RWPE1 (cell line): ENCODE measurements at regions of chr10 and their contacts with region 1.

Region 1: GRCh38 chr10:132223156-132223590 is 36.4 kb downstream of the DPYSL4 start:
- DNase-seq: peak; percentile 82
- H3K27ac ChIP-seq: no peak overlapping the region
- CTCF ChIP-seq: peak; percentile 80

Region 2: GRCh38 chr10:132193907-132194552 is 29.1 kb before region 1 on chr10:
- CTCF ChIA-PET with region 1: no interaction called
- POLR2A ChIA-PET with region 1: no interaction called
- DNase-seq: peak; percentile 67
- H3K27ac ChIP-seq: no peak overlapping the region
- CTCF ChIP-seq: no peak

Region 3: DNA sequence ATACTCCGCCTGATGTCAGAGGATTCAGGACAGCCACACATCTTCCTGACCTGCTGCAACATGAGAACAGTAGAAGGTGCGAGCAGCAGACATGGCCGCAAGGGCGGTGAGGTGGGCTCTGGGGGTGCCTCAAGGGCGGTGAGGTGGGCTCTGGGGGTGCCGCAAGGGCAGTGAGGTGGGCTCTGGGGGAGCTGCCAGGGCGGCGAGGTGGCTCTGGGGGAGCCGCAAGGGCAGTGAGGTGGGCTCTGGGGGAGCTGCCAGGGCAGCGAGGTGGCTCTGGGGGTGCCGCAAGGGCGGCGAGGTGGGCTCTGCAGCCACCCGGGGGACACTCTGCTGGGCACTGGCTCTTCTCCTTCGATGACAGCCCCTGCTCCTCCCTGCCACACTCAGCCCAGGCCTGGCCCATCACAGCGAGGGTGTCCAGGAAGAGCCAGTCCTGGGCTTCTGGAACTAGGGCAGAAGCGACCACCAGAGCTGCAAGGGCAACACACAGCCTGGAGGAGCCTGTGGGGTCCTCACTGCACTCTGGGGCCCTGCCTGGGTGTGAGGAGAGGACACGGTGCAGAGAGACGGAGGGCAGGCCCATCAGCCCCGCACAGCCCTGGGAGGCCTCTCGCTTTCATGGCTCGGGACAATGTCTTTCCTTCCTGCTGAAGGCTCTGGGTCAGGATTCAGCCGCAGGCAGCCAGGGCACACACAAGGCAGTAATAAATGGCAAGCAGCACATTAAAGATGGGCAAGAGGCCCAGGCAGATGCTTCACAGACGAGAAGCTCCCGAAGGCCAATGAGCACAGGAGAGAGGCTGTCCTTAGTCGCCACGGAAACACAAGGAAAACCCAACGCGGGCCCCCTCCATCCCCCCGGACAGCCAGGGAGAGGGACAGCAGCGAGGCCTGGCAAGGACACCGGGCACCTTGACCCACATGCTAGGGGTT is 42.1 kb after region 1 on chr10:
- CTCF ChIA-PET with region 1: no interaction called
- POLR2A ChIA-PET with region 1: no interaction called
- DNase-seq: no peak
- H3K27ac ChIP-seq: no peak overlapping the region
- CTCF ChIP-seq: no peak

Region 4: GRCh38 chr10:132353456-132354355 is 130.5 kb after region 1 on chr10:
- CTCF ChIA-PET with region 1: interaction called, 10 read pairs
- POLR2A ChIA-PET with region 1: no interaction called
- DNase-seq: no peak
- H3K27ac ChIP-seq: no peak overlapping the region
- CTCF ChIP-seq: no peak